ENCODE measurements at regions of chr12 and their contacts with region 1.

Region 1: GRCh38 chr12:65156366-65156841 is 13.0 kb upstream of the LEMD3 start:
- DNase-seq: peak; percentile 35
- H3K4me3 Mint-ChIP-seq: peak overlapping the region; percentile 19
- H3K27ac Mint-ChIP-seq: peak overlapping the region; percentile 37
- H3K4me1 Mint-ChIP-seq: peaks cover 16% of the 10 kb centered on the region
- H3K27me3 Mint-ChIP-seq: peaks cover 12% of the 10 kb centered on the region

Region 2: GRCh38 chr12:64625243-64626077 is 530.9 kb before region 1 on chr12:
- CTCF ChIA-PET with region 1: no interaction called
- intact Hi-C with region 1: no loop called
- DNase-seq: peak; percentile 62
- H3K4me3 Mint-ChIP-seq: peak overlapping the region; percentile 57
- H3K27ac Mint-ChIP-seq: peak overlapping the region; percentile 86
- H3K4me1 Mint-ChIP-seq: peaks cover 69% of the 10 kb centered on the region
- H3K27me3 Mint-ChIP-seq: no peaks in the 10 kb centered on the region

Region 3: GRCh38 chr12:65248656-65249633 is 92.5 kb after region 1 on chr12:
- CTCF ChIA-PET with region 1: no interaction called
- intact Hi-C with region 1: loop called (anchors 1 kb)
- DNase-seq: peak; percentile 40
- H3K4me3 Mint-ChIP-seq: no peak overlapping the region
- H3K27ac Mint-ChIP-seq: peak overlapping the region; percentile 32
- H3K4me1 Mint-ChIP-seq: peaks cover 19% of the 10 kb centered on the region
- H3K27me3 Mint-ChIP-seq: no peaks in the 10 kb centered on the region

Measured in activated naive CD4-positive, alpha-beta T cell treated with anti-CD3 and anti-CD28 coated beads for 36 hours (primary cell).